ENCODE measurements at regions of chr3 and their contacts with region 1.

Region 1: GRCh38 chr3:79361748-79362378 is 405.9 kb downstream of the ROBO1 start:
- DNase-seq: peak; percentile 50
- H3K4me3 Mint-ChIP-seq: no peak overlapping the region
- H3K27ac Mint-ChIP-seq: no peak overlapping the region
- H3K4me1 Mint-ChIP-seq: no peaks in the 10 kb centered on the region
- H3K27me3 Mint-ChIP-seq: peaks cover 89% of the 10 kb centered on the region
- CTCF ChIP-seq: peak; percentile 74

Region 2: GRCh38 chr3:78659386-78659987 is 702.4 kb before region 1 on chr3:
- CTCF ChIA-PET with region 1: interaction called, 3 read pairs
- POLR2A ChIA-PET with region 1: no interaction called
- intact Hi-C with region 1: loop called (anchors 2 kb)
- DNase-seq: peak; percentile 57
- H3K4me3 Mint-ChIP-seq: no peak overlapping the region
- H3K27ac Mint-ChIP-seq: no peak overlapping the region
- H3K4me1 Mint-ChIP-seq: no peaks in the 10 kb centered on the region
- H3K27me3 Mint-ChIP-seq: no peaks in the 10 kb centered on the region
- CTCF ChIP-seq: peak; percentile 63

Region 3: DNA sequence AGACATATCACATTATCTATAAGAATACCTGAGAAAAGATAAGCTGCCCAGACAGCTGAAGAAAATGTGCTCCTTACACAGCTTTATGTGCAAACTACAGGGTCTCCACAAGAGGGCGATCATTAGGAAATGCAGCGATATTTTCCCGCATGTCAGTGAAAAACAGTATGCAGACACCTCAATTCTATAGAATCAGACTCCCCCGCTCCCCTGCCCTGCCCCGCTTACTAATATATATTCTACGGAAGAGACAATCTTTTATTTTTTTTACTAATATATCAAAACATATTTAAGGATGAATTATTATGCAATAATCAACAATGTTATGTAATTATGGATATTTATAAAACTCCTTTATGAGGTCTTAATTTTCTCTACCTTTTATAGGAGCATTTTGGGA is 275.3 kb before region 1 on chr3:
- CTCF ChIA-PET with region 1: interaction called, 16 read pairs
- POLR2A ChIA-PET with region 1: no interaction called
- intact Hi-C with region 1: loop called (anchors 1 kb)
- DNase-seq: peak; percentile 69
- H3K4me3 Mint-ChIP-seq: no peak overlapping the region
- H3K27ac Mint-ChIP-seq: no peak overlapping the region
- H3K4me1 Mint-ChIP-seq: no peaks in the 10 kb centered on the region
- H3K27me3 Mint-ChIP-seq: peaks cover 100% of the 10 kb centered on the region
- CTCF ChIP-seq: peak; percentile 59

Region 4: GRCh38 chr3:79351699-79352098 is 10.2 kb before region 1 on chr3:
- CTCF ChIA-PET with region 1: interaction called, 11 read pairs
- POLR2A ChIA-PET with region 1: no interaction called
- intact Hi-C with region 1: no loop called
- DNase-seq: no peak
- H3K4me3 Mint-ChIP-seq: no peak overlapping the region
- H3K27ac Mint-ChIP-seq: no peak overlapping the region
- H3K4me1 Mint-ChIP-seq: no peaks in the 10 kb centered on the region
- H3K27me3 Mint-ChIP-seq: peaks cover 85% of the 10 kb centered on the region
- CTCF ChIP-seq: no peak

Region 5: DNA sequence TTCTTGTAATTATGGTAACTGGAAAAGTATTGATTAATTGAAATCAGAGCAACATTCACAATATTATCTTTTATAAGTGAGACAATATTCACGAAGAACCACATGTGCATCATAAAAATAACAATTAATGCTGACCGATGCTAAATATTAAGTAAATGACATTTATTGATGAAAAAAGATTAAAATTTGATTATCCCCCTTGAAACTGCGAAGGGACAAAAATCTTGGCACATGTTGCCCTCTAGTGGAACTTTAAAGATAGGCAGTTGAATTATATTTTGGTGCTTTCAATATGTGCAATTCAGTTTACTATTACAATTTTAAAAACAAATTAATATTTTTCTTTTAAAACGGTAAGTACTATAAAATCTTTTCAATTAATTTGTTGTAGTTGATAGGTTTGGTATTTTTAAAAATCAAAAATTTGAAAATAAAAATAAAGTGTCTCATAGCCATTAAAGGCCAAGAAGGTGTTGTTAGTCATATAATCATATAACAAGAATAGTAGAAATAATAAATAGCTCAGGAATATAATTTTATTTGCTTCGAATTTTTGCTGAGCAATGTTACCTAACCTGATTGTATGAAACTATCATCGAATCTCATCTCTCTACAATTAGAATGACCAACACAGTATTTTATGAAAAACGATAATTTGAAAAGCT is 135.7 kb after region 1 on chr3:
- CTCF ChIA-PET with region 1: no interaction called
- POLR2A ChIA-PET with region 1: no interaction called
- intact Hi-C with region 1: loop called (anchors 10 kb)
- DNase-seq: peak; percentile 28
- H3K4me3 Mint-ChIP-seq: no peak overlapping the region
- H3K27ac Mint-ChIP-seq: no peak overlapping the region
- H3K4me1 Mint-ChIP-seq: no peaks in the 10 kb centered on the region
- H3K27me3 Mint-ChIP-seq: peaks cover 20% of the 10 kb centered on the region
- CTCF ChIP-seq: peak; percentile 47

Region 6: GRCh38 chr3:80097674-80098073 is 735.8 kb after region 1 on chr3:
- CTCF ChIA-PET with region 1: no interaction called
- POLR2A ChIA-PET with region 1: no interaction called
- intact Hi-C with region 1: no loop called
- DNase-seq: no peak
- H3K4me3 Mint-ChIP-seq: no peak overlapping the region
- H3K27ac Mint-ChIP-seq: no peak overlapping the region
- H3K4me1 Mint-ChIP-seq: no peaks in the 10 kb centered on the region
- H3K27me3 Mint-ChIP-seq: no peaks in the 10 kb centered on the region
- CTCF ChIP-seq: no peak